Pancreas (tissue), 10 donors: ENCODE measurements at regions of chr12 and their contacts with region 1.

Region 1: DNA sequence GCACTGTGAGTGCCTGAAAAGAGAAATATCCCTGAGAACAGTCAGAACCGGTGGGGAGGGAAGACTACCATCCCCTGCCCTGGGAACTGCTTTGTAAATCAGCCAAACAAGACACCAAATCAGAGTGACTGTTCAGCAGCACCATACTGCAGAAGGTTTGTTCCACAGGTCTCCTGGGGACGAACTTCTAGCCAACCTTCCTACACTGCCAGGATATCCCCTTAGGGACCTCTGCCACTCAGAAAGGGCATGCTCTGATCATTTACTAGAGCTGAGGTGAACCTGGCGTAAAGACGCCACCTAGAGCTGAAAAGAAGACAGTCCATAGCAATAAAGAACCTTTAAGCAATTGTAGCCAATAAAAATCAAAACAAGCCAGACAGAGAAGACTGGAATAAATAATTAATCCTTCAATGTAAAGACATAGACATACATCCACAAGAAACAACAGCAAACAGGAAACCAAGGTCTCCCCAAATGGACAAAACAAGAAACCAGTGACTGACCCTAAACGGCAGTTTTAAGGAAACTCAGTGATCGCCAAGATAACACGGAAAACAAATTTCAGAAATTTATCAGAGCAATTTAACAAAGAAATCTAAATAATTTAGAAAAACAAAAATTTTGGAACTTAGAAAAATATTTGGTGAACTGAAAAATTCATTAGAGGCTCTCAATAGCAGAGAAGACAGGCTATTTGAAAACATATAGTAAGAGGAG is 228.1 kb upstream of the AMIGO2 start:
- DNase-seq: peak in 3 of 6 donors; percentile 29 to 44 (median 43)
- ATAC-seq: peak; percentile 77 to 98 (median 96)
- H3K4me3 ChIP-seq: no peak overlapping the region
- H3K27ac ChIP-seq: no peak overlapping the region
- H3K4me1 ChIP-seq: peaks cover 0 to 7% (median 4%) of the 10 kb centered on the region in 3 donors
- H3K27me3 ChIP-seq: no peaks in the 10 kb centered on the region
- CTCF ChIP-seq: peak in 3 of 4 donors; percentile 34 to 45 (median 43)

Region 2: DNA sequence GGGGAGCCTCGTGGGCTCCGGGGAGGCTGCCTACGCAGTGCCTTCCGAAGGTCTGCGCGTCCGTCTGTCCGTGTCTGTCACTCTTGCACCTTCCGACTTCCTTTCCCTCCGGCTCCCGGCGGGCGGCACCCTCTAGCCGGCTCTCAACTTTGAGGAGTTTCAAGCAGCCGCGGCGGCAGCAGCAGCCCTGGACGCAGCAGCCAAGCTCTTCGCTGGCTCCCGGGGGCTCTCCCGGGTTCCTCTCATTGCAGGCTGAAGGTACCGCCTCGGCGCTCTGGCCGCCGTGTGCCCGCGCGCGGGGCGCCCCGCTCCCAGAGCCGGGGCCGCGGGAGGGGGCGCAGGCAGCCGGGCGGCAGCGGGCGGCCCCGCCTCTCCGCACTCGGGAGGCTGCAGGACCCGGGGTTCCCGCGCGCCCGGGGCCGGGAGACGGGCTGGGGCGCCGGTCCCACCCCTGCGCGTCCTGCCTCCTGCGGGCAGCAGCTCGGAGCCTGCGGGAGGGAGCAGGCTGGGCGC is 228.3 kb before region 1 on chr12 and contains the starts of genes AMIGO2 and PCED1B:
- intact Hi-C with region 1: loop called in 2 of 3 experiments (anchors 10 kb)
- DNase-seq: peak; percentile 70 to 93 (median 82)
- ATAC-seq: peak; percentile 74 to 90 (median 84)
- H3K4me3 ChIP-seq: peak within 1 kb of the TSS; percentile 55 to 77 (median 70)
- H3K27ac ChIP-seq: peak within 1 kb of the TSS; percentile 49 to 88 (median 66)
- H3K4me1 ChIP-seq: peaks cover 0 to 14% (median 0%) of the 10 kb centered on the region in 3 donors
- H3K27me3 ChIP-seq: no peaks in the 10 kb centered on the region
- CTCF ChIP-seq: no peak
- total RNA-seq, gene AMIGO2: 1.3 to 7.5 (median 2.2) TPM
- total RNA-seq, gene PCED1B: 0.71 to 6.4 (median 1.5) TPM